Activated B cell treated with CpG ODN at 0.5 μM for 24 hours (primary cell): ENCODE measurements at regions of chr16 and their contacts with region 1.

Region 1: GRCh38 chr16:68851601-68852000 is 8.3 kb downstream of the TANGO6 start:
- DNase-seq: no peak
- ATAC-seq: no peak
- H3K4me3 Mint-ChIP-seq: no peak overlapping the region
- H3K27ac Mint-ChIP-seq: no peak overlapping the region
- H3K4me1 Mint-ChIP-seq: peaks cover 8% of the 10 kb centered on the region
- H3K27me3 Mint-ChIP-seq: no peaks in the 10 kb centered on the region
- CTCF ChIP-seq: no peak

Region 2: GRCh38 chr16:68811503-68811902 is 40.1 kb before region 1 on chr16:
- CTCF ChIA-PET with region 1: no interaction called
- POLR2A ChIA-PET with region 1: no interaction called
- intact Hi-C with region 1: no loop called
- DNase-seq: no peak
- ATAC-seq: no peak
- H3K4me3 Mint-ChIP-seq: no peak overlapping the region
- H3K27ac Mint-ChIP-seq: no peak overlapping the region
- H3K4me1 Mint-ChIP-seq: no peaks in the 10 kb centered on the region
- H3K27me3 Mint-ChIP-seq: peaks cover 10% of the 10 kb centered on the region
- CTCF ChIP-seq: no peak

Region 3: DNA sequence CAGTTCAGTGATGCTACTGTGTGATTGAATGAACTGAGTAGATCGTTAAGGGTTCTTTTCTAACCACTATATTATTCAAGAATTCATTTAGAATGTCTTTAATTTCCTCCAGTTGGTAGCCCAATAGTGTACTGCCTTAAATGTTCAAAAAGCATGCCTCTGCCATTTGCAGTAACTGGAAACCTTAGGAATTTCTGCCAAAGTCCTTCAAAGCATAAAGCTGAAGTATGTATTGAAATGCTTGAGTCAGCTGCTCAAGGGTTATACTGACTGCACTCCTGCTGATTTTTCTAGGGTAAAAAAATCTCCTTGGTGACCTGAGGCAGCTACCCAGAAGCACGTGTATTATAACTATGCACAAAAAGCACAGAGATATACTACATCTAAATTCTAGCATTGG is 391.9 kb after region 1 on chr16:
- CTCF ChIA-PET with region 1: no interaction called
- POLR2A ChIA-PET with region 1: interaction called, 10 read pairs
- intact Hi-C with region 1: no loop called
- DNase-seq: no peak
- ATAC-seq: no peak
- H3K4me3 Mint-ChIP-seq: no peak overlapping the region
- H3K27ac Mint-ChIP-seq: no peak overlapping the region
- H3K4me1 Mint-ChIP-seq: no peaks in the 10 kb centered on the region
- H3K27me3 Mint-ChIP-seq: no peaks in the 10 kb centered on the region
- CTCF ChIP-seq: no peak